ENCODE measurements at regions of chr12 and their contacts with region 1.

Region 1: DNA sequence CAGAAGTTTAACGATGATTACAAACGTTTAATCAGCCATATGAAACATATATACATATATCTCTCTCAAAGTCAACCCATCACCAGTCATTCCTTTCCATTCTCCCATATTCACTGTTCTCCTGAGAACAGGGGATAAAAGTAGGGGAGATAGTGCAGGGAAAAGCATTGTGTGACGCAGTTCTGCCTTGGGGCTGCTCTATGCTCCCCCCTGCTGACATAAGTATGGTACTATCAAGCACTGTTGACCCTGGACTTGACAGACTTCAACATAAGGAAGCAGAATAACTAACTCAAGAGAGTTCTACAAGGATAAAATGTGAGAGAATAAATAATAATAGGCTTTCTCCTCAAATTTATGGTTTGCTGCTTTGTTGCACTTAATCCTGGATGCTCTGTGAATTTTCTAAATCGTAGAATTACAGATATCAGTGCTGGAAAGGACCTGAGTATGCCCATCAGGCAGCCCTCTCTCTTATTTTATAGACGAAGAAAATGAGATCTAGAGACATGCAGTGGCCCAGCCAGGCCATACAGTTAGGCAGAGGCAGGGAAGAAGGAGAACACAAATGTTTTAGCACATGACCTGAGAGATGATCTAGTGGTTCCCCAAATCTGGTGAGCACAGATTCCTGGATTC is 87.2 kb downstream of the SCN8A start:
- DNase-seq: peak; percentile 21
- H3K4me3 Mint-ChIP-seq: no peak overlapping the region
- H3K27ac Mint-ChIP-seq: no peak overlapping the region
- H3K4me1 Mint-ChIP-seq: peaks cover 4% of the 10 kb centered on the region
- H3K27me3 Mint-ChIP-seq: peaks cover 32% of the 10 kb centered on the region

Region 2: DNA sequence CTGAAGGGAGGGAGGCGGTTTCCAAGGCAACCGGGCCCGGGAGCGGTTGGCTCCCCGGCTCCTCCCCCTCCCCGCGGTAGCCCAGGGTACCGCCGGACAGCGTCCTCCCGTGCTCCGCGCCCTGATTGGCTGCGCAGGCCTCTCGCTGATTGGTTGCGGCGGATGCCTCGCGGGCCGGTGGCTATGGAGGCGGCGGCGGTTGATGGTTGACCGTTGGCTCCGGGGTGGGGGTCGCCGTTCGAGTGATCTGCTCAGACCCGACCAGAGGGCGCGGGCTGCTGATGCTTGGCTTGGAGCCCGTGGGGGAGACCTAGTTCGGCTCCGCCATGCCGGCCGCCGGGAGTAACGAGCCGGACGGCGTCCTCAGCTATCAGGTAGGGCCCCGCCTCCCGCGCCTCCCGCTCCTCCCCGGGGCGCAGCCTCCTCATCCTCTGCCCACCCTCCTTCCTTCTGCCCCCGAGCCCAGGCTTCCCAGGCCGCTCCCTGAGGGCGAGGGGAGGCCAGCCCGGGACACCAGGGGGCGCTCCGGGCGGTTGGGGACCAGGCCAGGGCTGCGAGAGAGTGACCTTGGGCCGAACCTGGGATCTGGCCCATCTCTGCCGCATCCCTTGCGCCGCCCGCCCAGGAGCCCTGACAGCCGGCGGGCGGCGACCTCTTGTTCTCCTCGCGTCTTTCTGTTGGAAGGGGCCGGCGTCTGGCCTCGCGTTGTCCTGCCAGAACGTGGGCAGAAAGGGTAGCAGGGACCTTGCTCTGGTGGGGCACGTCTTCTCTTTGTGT is 253.4 kb before region 1 on chr12 and contains the start of gene SLC4A8:
- CTCF ChIA-PET with region 1: interaction called, 10 read pairs
- POLR2A ChIA-PET with region 1: no interaction called
- DNase-seq: peak; percentile 84
- H3K4me3 Mint-ChIP-seq: peak within 1 kb of the TSS; percentile 71
- H3K27ac Mint-ChIP-seq: no peak within 1 kb of the TSS
- H3K4me1 Mint-ChIP-seq: peaks cover 15% of the 10 kb centered on the region
- H3K27me3 Mint-ChIP-seq: peaks cover 3% of the 10 kb centered on the region
- total RNA-seq, gene SLC4A8: 5.2 to 5.4 TPM

Region 3: DNA sequence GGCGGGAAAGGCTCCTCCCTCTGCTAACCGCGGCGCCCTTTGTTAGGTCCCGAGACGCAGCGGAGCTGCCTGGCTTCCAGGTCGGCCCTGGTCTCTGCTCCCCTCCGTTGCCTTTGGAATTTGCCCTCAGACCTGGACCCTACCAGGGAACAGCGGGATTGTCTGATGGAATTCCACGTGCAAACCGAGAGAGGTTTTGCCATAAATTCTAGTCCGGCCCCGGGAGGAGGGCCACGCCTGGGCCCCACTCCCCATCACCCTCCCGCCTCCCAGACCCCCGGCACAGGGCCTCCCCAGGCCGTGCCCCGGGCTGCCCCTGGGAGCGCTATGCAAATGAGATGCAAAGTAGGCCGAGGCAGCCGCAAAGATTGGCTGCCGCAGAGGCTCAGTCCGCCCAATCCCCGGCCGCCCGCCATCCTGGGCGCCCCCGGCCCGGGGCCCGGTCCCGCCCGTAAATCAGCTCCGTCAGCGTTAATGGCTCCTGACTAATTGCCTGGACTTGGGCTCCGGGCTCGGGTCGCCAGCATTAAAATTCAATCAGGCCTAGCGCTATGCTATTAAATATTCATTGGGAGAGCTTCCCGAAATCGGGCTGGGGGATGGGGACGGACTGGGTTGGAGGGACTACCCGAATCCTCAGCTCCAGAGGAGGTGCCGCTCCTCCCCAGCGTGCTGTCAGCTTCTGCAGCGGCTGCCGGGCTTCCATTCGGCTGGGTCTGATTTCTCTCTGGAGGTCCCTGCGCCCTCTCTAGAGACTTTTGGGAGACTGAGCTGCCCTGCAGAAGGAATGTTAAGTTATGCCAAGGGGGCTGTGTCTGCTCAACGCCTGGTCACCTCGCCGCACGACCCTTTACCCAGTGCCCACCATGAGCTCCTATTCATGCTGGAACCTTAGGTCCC is 186.0 kb after region 1 on chr12:
- CTCF ChIA-PET with region 1: no interaction called
- POLR2A ChIA-PET with region 1: no interaction called
- DNase-seq: no peak
- H3K4me3 Mint-ChIP-seq: no peak overlapping the region
- H3K27ac Mint-ChIP-seq: no peak overlapping the region
- H3K4me1 Mint-ChIP-seq: peaks cover 1% of the 10 kb centered on the region
- H3K27me3 Mint-ChIP-seq: peaks cover 65% of the 10 kb centered on the region

Measured in activated CD4-positive, alpha-beta memory T cell treated with anti-CD3 and anti-CD28 coated beads, Interleukin-2, amount 10 ng/mL, durations not matched to agents 7 days and 5 days (primary cell).